PC-9 (cell line): ENCODE measurements at regions of chr5 and their contacts with region 1.

Region 1: DNA sequence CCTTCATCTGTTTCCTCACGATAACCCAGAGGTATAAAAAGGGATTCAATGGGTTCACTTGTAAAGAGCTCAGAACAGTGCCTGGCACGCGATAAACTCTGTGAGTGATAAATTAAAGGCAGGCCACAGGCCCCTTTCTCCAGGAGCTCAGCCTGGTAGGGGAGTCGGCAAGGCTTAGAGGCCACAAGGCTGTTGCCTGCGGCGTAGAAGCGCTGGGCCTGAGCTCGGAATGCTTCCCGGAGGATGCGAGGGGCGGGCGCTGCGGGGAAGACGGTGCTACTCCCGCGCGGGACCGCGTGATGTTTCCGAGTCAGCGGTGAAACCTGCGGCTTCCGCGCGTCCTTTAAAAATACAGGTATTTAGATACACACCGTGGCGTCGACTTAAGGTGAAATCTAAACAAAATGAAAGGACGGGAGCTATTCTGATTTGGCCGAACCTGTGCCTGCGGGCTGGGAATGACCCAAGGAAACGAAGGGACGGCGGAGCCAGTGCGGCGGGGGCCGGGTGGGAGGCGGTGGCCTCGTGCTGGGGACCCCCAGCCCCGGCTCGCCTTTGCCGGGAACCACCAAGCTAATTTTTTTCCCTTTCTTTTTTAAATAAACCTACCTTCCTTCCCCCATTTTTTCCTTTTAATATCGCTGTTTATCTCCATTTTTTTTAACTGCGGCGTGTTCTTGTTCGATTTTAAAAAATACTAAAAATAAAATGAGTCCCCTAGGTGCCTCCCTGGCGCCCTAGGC is 6.2 kb downstream of the NKX2-5 start:
- DNase-seq: no peak
- H3K4me3 ChIP-seq: no peak overlapping the region
- H3K27ac ChIP-seq: no peak overlapping the region
- H3K4me1 ChIP-seq: no peaks in the 10 kb centered on the region
- H3K27me3 ChIP-seq: peaks cover 6% of the 10 kb centered on the region; the same call in 1 of the 2 replicates
- CTCF ChIP-seq: no peak

Region 2: GRCh38 chr5:172015346-172015745 is 1213.5 kb before region 1 on chr5:
- CTCF ChIA-PET with region 1: no interaction called
- POLR2A ChIA-PET with region 1: interaction called, 17 read pairs
- intact Hi-C with region 1: no loop called
- DNase-seq: no peak
- H3K4me3 ChIP-seq: no peak overlapping the region
- H3K27ac ChIP-seq: no peak overlapping the region
- H3K4me1 ChIP-seq: no peaks in the 10 kb centered on the region
- H3K27me3 ChIP-seq: no peaks in the 10 kb centered on the region
- CTCF ChIP-seq: no peak

Region 3: DNA sequence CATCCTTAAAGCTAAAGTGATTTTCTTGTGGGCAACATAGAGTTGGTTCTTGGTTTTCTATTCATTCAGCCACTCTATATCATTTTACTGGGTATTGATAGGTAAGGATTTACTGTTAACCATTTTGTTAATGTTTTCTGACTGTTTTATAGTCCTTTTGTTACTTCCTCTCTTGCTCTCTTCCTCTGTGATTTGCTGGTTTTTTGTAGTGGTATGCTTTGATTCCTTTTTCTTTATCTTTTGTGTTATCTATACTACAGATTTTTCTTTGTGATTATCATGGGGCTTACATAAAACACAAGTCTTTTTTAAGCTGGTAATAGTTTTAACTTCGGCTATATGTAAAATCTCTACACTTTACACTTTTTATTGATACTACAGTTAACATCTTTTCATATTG is 129.3 kb before region 1 on chr5:
- CTCF ChIA-PET with region 1: no interaction called
- POLR2A ChIA-PET with region 1: no interaction called
- intact Hi-C with region 1: no loop called
- DNase-seq: no peak
- H3K4me3 ChIP-seq: no peak overlapping the region
- H3K27ac ChIP-seq: no peak overlapping the region
- H3K4me1 ChIP-seq: peaks cover 4% of the 10 kb centered on the region
- H3K27me3 ChIP-seq: no peaks in the 10 kb centered on the region
- CTCF ChIP-seq: no peak

Region 4: DNA sequence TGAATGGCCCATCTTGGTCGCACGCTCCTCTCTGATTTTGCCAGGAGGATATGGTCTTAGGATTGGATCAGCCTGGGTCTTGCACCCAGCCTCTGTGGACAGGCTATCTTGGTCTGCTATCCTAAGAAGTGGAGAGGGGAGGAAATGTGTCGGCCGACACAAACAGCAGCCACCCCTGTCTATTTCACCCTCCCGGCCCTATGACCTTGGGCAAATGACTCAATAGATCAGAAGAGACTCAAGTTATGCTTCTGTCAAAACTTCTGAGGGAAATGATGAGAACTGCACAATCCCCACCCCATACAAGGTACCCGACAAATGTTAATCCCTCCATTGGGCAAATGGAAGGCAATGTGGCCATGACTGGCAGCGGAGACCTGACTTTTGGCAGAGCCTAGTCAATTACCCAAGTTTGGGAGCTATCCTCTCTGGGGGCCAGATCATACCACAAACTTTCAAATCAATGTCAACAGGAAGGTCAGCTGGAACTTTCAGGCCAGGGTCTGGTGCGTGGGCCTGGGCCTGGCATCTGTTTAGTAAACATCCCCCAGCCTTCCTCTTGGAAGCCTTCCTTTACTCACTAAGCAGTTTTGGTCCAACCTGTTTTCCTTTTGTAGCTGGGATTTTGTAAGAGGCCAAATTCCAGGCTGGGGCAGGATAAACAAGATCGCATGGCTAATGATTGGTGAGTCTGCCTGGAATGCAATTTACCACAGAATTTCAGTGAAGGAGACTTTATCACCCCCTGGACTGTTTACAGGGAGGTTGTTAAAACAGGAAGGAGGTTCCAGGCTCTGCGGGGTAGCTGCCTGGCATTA is 595.1 kb after region 1 on chr5:
- CTCF ChIA-PET with region 1: no interaction called
- POLR2A ChIA-PET with region 1: no interaction called
- intact Hi-C with region 1: no loop called
- DNase-seq: peak; percentile 82 to 98
- H3K4me3 ChIP-seq: peak overlapping the region; percentile 25; the same call in 1 of the 2 replicates
- H3K27ac ChIP-seq: peak overlapping the region; percentile 77
- H3K4me1 ChIP-seq: peaks cover 58% of the 10 kb centered on the region
- H3K27me3 ChIP-seq: no peaks in the 10 kb centered on the region
- CTCF ChIP-seq: no peak